AG04449 (cell line): ENCODE measurements at regions of chr14 and their contacts with region 1.

Region 1: DNA sequence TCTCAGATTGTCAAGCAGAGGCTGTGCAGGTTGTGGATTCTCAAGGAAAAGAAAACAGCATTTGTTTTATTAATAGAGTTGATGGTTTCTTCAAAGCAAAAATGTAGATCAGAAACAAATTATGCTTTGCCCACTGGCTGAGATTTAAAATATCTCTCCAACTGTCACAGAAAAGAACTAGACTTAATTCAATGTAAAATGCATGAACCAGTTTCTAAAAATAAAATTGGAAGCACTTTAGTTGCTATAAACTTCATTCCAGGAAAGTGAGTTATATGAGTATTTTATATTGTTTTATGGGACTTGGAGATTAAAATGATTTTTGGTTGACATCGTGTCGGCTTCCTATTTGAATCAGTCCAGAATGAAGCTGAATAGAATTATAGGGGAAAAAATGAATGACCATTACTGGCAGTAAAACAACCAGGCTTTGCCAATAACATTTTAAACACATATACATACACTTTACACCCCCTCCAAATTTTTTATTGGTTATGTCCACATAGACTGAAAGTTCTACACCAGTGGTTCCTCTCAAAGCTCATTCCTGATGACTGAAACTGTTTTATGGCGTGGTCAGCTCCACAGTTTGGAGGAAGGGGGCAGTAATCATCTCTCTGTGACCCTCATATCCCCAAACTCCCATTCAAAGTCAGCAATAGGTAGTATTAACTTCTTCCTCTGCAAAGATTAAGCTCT is 55.5 kb upstream of the DAAM1 start:
- DNase-seq: no peak
- H3K4me3 ChIP-seq: no peak overlapping the region
- CTCF ChIP-seq: no peak

Region 2: GRCh38 chr14:59148334-59148900 is 15.5 kb after region 1 on chr14:
- CTCF ChIA-PET with region 1: interaction called, 13 read pairs
- POLR2A ChIA-PET with region 1: no interaction called
- DNase-seq: no peak
- H3K4me3 ChIP-seq: no peak overlapping the region
- CTCF ChIP-seq: no peak

Region 3: DNA sequence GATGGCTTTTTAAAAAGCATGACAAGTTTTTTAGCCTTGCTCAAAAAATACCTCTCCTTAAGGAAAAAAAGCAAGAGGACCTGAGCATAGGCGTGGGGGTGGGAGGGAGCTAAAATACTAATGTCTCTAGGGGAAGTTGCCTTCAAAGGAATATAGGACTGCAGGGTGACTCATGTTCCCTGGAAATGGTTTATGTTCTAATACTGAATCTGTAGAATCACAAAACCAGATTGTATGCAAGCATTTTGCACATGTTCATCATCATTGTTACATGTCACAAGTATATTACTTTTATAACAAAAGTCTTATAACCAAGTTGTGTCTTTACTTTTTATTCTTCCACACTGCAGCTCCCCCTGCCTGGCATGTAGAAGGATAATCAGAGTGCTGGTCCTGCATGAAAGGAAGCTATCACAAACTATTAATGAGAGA is 295.7 kb after region 1 on chr14:
- CTCF ChIA-PET with region 1: interaction called, 443 read pairs
- POLR2A ChIA-PET with region 1: no interaction called
- DNase-seq: no peak
- H3K4me3 ChIP-seq: no peak overlapping the region
- CTCF ChIP-seq: peak; percentile 27